ENCODE measurements at regions of chr14 and their contacts with region 1.

Region 1: GRCh38 chr14:101371799-101372793 is 189.2 kb upstream of the DIO3 start:
- DNase-seq: peak in 1 of 2 donors; percentile 14
- H3K4me3 ChIP-seq: no peak overlapping the region
- H3K27ac ChIP-seq: no peak overlapping the region
- H3K4me1 ChIP-seq: no peaks in the 10 kb centered on the region
- H3K27me3 ChIP-seq: no peaks in the 10 kb centered on the region
- CTCF ChIP-seq: no peak
- POLR2A ChIP-seq: no peak

Region 2: DNA sequence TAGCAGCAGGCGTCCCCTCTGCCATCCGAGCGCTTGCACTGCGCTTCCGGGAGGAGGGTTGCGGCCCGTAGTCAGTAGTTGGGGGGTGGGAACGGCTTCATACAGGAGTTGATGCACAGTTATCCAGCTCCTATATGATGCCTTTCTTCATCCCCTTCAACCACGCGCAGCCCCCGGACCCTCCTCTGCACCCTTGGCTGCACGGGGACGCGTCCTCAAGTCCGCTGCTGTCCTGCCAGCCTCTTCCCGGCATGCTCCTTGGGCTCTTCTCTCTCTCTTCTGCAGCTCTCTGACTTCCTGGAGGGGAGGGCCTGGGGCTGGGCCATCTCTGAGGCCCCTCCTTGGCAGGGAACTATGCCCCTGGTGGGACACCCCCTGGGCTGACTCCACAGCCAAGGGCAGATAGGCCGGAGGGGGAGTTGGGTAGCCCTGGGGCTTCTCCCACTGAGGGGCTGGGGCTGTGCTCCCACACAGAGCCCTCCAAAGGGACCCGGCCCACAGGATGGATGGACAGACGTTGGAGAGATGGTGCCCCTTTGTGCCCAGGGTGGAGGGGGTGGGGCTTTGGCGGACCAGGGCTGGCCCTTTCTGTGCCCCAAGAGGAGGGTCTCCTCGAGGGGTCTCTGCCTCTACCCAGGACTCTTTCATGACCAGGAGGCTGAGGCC is 497.5 kb before region 1 on chr14:
- intact Hi-C with region 1: loop called (anchors 5 kb)
- DNase-seq: no peak
- H3K4me3 ChIP-seq: no peak overlapping the region
- H3K27ac ChIP-seq: no peak overlapping the region
- H3K4me1 ChIP-seq: no peaks in the 10 kb centered on the region
- H3K27me3 ChIP-seq: peaks cover 0 to 23% of the 10 kb centered on the region in 2 donors
- CTCF ChIP-seq: no peak
- POLR2A ChIP-seq: no peak

Region 3: GRCh38 chr14:102209217-102209966 is 837.3 kb after region 1 on chr14:
- intact Hi-C with region 1: no loop called
- DNase-seq: no peak
- H3K4me3 ChIP-seq: no peak overlapping the region
- H3K27ac ChIP-seq: no peak overlapping the region
- H3K4me1 ChIP-seq: no peaks in the 10 kb centered on the region
- H3K27me3 ChIP-seq: no peaks in the 10 kb centered on the region
- CTCF ChIP-seq: peak in 1 of 3 donors; percentile 16
- POLR2A ChIP-seq: no peak

Measured in breast epithelium (tissue), 4 donors.